ENCODE measurements at regions of chr3 and their contacts with region 1.

Region 1: GRCh38 chr3:180989291-180990163 is at the start of gene DNAJC19:
- DNase-seq: peak; percentile 97
- H3K4me3 Mint-ChIP-seq: peak within 1 kb of the TSS; percentile 99
- H3K27ac Mint-ChIP-seq: peak within 1 kb of the TSS; percentile 95
- H3K4me1 Mint-ChIP-seq: peaks cover 5% of the 10 kb centered on the region
- H3K27me3 Mint-ChIP-seq: no peaks in the 10 kb centered on the region
- CTCF ChIP-seq: no peak
- total RNA-seq, gene DNAJC19: 73.5 and 94.5 TPM in 2 replicates

Region 2: GRCh38 chr3:181176601-181177000 is 187.1 kb after region 1 on chr3:
- CTCF ChIA-PET with region 1: interaction called, 5 read pairs
- POLR2A ChIA-PET with region 1: interaction called, 6 read pairs
- intact Hi-C with region 1: loop called (anchors 1 kb)
- DNase-seq: peak; percentile 77
- H3K4me3 Mint-ChIP-seq: no peak overlapping the region
- H3K27ac Mint-ChIP-seq: no peak overlapping the region
- H3K4me1 Mint-ChIP-seq: peaks cover 5% of the 10 kb centered on the region
- H3K27me3 Mint-ChIP-seq: no peaks in the 10 kb centered on the region
- CTCF ChIP-seq: peak; percentile 45